ENCODE measurements at regions of chr18 and their contacts with region 1.

Region 1: GRCh38 chr18:74342416-74343043 is 26.9 kb downstream of the C18orf63 start:
- DNase-seq: peak in 5 of 9 experiments; percentile 22 to 75 (median 41)
- ATAC-seq: no peak
- H3K4me3 ChIP-seq: no peak overlapping the region
- H3K4me3 Mint-ChIP-seq: no peak overlapping the region
- H3K27ac ChIP-seq: no peak overlapping the region
- H3K27ac Mint-ChIP-seq: no peak overlapping the region
- H3K4me1 ChIP-seq: no peaks in the 10 kb centered on the region
- H3K4me1 Mint-ChIP-seq: no peaks in the 10 kb centered on the region
- H3K27me3 ChIP-seq: no peaks in the 10 kb centered on the region
- H3K27me3 Mint-ChIP-seq: peaks cover 7% of the 10 kb centered on the region
- CTCF ChIP-seq: peak; percentile 74

Region 2: DNA sequence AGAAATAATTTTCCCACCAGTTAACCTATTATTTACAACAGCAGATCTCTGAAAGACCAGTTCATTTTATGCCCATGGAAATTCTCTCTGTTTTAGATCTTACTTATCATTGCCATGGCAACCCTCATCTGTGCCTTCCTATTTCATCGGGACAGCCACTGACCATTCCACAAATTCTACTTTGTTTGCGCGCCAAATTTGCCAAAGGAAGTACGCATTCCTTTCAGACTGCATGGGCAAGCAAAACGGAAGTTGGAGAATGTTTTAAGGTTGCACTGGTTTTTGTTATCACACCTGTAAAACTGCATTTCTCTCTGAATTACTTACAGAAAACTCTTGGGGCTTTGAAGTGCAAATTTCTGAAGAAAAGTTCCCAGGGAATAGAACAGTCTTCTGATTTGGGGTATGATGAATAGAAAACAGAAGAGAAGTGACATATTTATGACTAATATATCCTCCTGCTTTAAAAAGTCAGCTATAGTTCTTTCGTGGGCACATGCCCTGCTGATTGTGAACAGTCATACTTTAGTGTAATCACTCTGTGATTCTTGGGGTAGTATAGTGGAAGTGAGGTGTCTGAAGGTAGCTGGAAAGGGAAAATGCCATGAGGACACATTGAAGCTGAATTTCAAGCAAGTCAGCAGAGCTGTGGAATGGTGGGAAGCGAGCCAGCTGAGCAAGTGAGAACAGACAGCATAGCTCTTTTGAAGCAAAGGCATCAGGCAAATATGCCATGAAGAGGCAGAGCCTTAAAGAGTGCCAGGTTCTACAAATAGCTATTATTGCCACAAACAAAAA is 1495.6 kb before region 1 on chr18:
- CTCF ChIA-PET with region 1: no interaction called
- POLR2A ChIA-PET with region 1: no interaction called
- intact Hi-C with region 1: loop called in 1 of 2 experiments (anchors 10 kb)
- DNase-seq: no peak
- ATAC-seq: no peak
- H3K4me3 ChIP-seq: no peak overlapping the region
- H3K4me3 Mint-ChIP-seq: no peak overlapping the region
- H3K27ac ChIP-seq: no peak overlapping the region
- H3K27ac Mint-ChIP-seq: no peak overlapping the region
- H3K4me1 ChIP-seq: no peaks in the 10 kb centered on the region
- H3K4me1 Mint-ChIP-seq: no peaks in the 10 kb centered on the region
- H3K27me3 ChIP-seq: no peaks in the 10 kb centered on the region
- H3K27me3 Mint-ChIP-seq: no peaks in the 10 kb centered on the region
- CTCF ChIP-seq: no peak

Region 3: GRCh38 chr18:74081966-74082741 is 260.4 kb before region 1 on chr18:
- CTCF ChIA-PET with region 1: interaction called, 14 read pairs
- POLR2A ChIA-PET with region 1: interaction called, 4 read pairs
- intact Hi-C with region 1: loop called (anchors 1 to 2 kb)
- DNase-seq: peak; percentile 25 to 82 (median 64)
- ATAC-seq: peak; percentile 96
- H3K4me3 ChIP-seq: peak overlapping the region; percentile 9 to 28
- H3K4me3 Mint-ChIP-seq: peak overlapping the region; percentile 82
- H3K27ac ChIP-seq: peak overlapping the region; percentile 39 to 65
- H3K27ac Mint-ChIP-seq: peak overlapping the region; percentile 98
- H3K4me1 ChIP-seq: peaks cover 18% of the 10 kb centered on the region
- H3K4me1 Mint-ChIP-seq: peaks cover 17% of the 10 kb centered on the region
- H3K27me3 ChIP-seq: no peaks in the 10 kb centered on the region
- H3K27me3 Mint-ChIP-seq: no peaks in the 10 kb centered on the region
- CTCF ChIP-seq: no peak

Region 4: GRCh38 chr18:74204526-74205152 is 137.9 kb before region 1 on chr18:
- CTCF ChIA-PET with region 1: interaction called, 64 read pairs
- POLR2A ChIA-PET with region 1: interaction called, 3 read pairs
- intact Hi-C with region 1: no loop called
- DNase-seq: peak in 2 of 9 experiments; percentile 34 to 35
- ATAC-seq: no peak
- H3K4me3 ChIP-seq: no peak overlapping the region
- H3K4me3 Mint-ChIP-seq: no peak overlapping the region
- H3K27ac ChIP-seq: no peak overlapping the region
- H3K27ac Mint-ChIP-seq: no peak overlapping the region
- H3K4me1 ChIP-seq: no peaks in the 10 kb centered on the region
- H3K4me1 Mint-ChIP-seq: no peaks in the 10 kb centered on the region
- H3K27me3 ChIP-seq: no peaks in the 10 kb centered on the region
- H3K27me3 Mint-ChIP-seq: peaks cover 5% of the 10 kb centered on the region
- CTCF ChIP-seq: no peak

Region 5: GRCh38 chr18:74291771-74292540 is 50.6 kb before region 1 on chr18 and contains the start of gene CYB5A:
- CTCF ChIA-PET with region 1: interaction called, 3 read pairs
- POLR2A ChIA-PET with region 1: no interaction called
- intact Hi-C with region 1: loop called in 1 of 2 experiments (anchors 5 kb)
- DNase-seq: peak; percentile 98 to 99 (median 99)
- ATAC-seq: peak; percentile 94
- H3K4me3 ChIP-seq: peak within 1 kb of the TSS; percentile 85 to 100
- H3K4me3 Mint-ChIP-seq: no peak within 1 kb of the TSS
- H3K27ac ChIP-seq: peak within 1 kb of the TSS; percentile 44 to 61
- H3K27ac Mint-ChIP-seq: peak within 1 kb of the TSS; percentile 86
- H3K4me1 ChIP-seq: peaks cover 8% of the 10 kb centered on the region
- H3K4me1 Mint-ChIP-seq: peaks cover 21% of the 10 kb centered on the region
- H3K27me3 ChIP-seq: no peaks in the 10 kb centered on the region
- H3K27me3 Mint-ChIP-seq: no peaks in the 10 kb centered on the region
- CTCF ChIP-seq: peak; percentile 4
- total RNA-seq, gene CYB5A: 4.4 to 5.9 TPM

Region 6: DNA sequence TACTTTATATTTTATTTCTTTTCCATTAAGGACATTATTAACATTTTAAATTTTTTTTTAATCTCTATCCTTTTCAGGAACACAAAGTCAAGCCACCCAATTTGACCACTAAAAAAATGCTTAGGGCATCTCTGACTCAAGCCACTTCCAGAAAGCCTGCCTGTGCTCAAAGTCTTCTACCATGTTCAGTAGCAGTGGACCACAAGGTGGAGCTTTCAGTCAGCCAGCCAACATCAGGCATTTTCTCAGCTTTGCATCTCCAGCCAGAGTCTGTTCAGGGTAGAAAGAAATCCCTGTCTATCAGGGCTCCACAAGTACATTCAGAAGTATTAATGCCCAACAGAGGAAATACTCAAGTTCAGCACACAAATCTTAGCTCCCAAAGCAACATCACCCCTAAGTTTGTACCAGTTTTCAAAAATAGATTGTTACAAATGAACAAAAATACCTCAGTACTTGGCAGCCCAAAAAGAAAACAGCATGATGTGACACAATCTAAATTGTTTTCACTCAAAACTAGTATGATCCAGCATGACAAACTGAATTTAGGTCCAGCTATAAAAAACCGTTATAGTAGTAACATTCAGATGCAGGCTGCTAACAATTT is 10.7 kb after region 1 on chr18:
- CTCF ChIA-PET with region 1: interaction called, 11 read pairs
- POLR2A ChIA-PET with region 1: interaction called, 3 read pairs
- intact Hi-C with region 1: no loop called
- DNase-seq: peak; percentile 27 to 83 (median 57)
- ATAC-seq: peak; percentile 92
- H3K4me3 ChIP-seq: no peak overlapping the region
- H3K4me3 Mint-ChIP-seq: no peak overlapping the region
- H3K27ac ChIP-seq: no peak overlapping the region
- H3K27ac Mint-ChIP-seq: no peak overlapping the region
- H3K4me1 ChIP-seq: peaks cover 4% of the 10 kb centered on the region
- H3K4me1 Mint-ChIP-seq: peaks cover 11% of the 10 kb centered on the region
- H3K27me3 ChIP-seq: no peaks in the 10 kb centered on the region
- H3K27me3 Mint-ChIP-seq: no peaks in the 10 kb centered on the region
- CTCF ChIP-seq: peak; percentile 77

Region 7: DNA sequence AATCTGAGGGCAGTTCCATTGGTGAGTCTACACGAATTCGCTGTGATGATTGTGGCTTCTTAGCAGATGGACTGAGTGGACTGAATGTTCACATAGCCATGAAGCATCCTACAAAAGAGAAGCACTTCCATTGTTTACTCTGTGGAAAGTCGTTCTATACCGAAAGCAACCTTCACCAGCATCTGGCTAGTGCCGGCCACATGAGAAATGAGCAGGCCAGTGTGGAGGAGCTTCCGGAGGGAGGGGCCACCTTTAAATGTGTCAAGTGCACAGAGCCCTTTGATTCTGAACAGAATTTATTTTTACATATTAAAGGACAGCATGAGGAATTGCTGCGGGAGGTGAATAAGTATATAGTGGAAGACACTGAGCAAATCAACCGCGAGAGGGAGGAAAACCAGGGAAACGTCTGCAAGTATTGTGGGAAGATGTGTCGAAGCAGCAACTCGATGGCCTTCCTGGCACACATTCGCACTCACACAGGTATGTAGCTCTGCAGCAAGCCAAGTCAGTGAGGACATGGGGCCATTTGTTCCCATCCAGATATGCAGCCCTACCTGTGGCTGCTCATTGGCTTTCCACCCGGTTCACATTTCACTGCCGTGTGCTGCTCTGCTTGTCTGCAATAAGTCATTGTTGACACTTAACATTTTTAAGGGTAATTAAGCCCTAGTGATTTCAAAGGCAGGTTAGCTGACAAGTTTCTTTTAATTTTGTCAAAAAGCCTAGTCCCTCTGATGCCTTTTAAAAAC is 292.9 kb after region 1 on chr18:
- CTCF ChIA-PET with region 1: no interaction called
- POLR2A ChIA-PET with region 1: no interaction called
- intact Hi-C with region 1: no loop called
- DNase-seq: no peak
- ATAC-seq: no peak
- H3K4me3 ChIP-seq: no peak overlapping the region
- H3K4me3 Mint-ChIP-seq: no peak overlapping the region
- H3K27ac ChIP-seq: no peak overlapping the region
- H3K27ac Mint-ChIP-seq: no peak overlapping the region
- H3K4me1 ChIP-seq: peaks cover 27% of the 10 kb centered on the region
- H3K4me1 Mint-ChIP-seq: peaks cover 37% of the 10 kb centered on the region
- H3K27me3 ChIP-seq: no peaks in the 10 kb centered on the region
- H3K27me3 Mint-ChIP-seq: no peaks in the 10 kb centered on the region
- CTCF ChIP-seq: no peak